ENCODE measurements at regions of chr20 and their contacts with region 1.

Region 1: GRCh38 chr20:53857723-53858236 is 212.6 kb downstream of the BCAS1 start:
- DNase-seq: no peak
- ATAC-seq: no peak
- H3K4me3 Mint-ChIP-seq: no peak overlapping the region
- H3K27ac Mint-ChIP-seq: no peak overlapping the region
- H3K4me1 Mint-ChIP-seq: peaks cover 16% of the 10 kb centered on the region
- H3K27me3 Mint-ChIP-seq: no peaks in the 10 kb centered on the region
- CTCF ChIP-seq: no peak

Region 2: DNA sequence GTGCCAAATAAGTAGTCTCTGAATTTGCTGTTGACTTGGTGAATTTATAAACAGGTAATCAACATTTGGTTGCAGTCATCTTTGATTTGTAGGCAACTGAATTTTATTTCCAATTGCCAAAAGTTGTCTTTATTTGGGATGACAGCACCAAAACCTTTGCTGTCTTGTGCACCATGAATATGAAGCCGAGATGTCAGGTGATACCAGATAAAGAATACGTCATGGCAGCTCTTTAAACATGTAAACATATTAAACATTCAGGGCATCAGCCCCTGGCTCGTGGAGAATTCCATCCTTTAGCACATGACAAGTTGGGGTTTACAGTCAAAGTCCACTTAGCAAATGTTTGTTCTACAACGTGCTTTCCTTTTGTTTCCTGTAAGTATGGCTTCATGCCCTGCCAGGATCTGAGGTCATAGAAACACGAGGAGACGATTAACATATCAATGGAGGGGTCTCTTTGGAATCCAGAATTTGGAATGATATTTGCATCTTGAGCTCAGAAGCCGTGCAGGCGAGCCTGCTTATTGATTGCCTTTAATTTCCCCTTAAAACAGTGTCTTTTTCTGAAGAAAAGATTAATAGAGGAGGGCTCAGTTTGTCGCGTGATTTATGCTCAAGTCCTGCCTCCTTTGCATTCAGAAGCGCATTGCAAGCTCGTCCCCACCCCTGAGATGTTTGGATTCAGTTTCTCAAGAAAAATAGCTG is 93.9 kb before region 1 on chr20:
- CTCF ChIA-PET with region 1: no interaction called
- POLR2A ChIA-PET with region 1: interaction called, 12 read pairs
- intact Hi-C with region 1: no loop called
- DNase-seq: no peak
- ATAC-seq: no peak
- H3K4me3 Mint-ChIP-seq: no peak overlapping the region
- H3K27ac Mint-ChIP-seq: no peak overlapping the region
- H3K4me1 Mint-ChIP-seq: peaks cover 25% of the 10 kb centered on the region
- H3K27me3 Mint-ChIP-seq: no peaks in the 10 kb centered on the region
- CTCF ChIP-seq: no peak